ENCODE measurements at regions of chr22 and their contacts with region 1.

Region 1: DNA sequence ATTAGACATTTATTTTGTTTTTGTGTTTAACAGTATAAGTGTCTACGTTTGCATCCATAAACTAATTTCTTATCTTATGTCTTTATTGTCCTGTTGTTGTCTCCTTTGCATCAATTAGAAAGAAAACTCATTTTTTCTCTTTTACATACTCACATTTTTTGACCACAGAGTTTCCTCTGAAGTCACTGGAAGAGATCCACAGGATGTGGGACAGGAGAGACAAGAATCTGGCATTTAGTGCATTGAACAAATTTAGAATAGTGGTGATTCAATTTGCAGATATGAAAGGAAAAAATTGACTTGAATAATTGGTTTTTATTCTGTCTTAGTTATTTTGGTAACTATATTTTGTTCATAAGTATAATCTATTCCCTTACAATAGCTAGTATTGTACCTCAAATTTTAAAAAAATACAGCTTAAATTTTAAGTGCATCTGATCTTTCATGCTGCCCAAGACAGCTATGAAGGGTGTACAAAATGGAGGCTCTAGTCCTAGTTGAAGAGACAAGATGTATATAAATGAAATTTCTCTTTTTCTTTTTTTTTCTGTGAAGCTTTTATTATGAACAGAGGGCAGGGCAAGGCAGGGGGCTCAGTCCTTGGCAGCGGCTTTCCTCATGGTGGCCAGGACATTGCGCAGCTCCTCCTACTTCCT is 24.4 kb downstream of the HORMAD2 start:
- DNase-seq: peak; percentile 29
- H3K4me3 Mint-ChIP-seq: peak overlapping the region; percentile 51
- H3K27ac Mint-ChIP-seq: peak overlapping the region; percentile 87
- H3K4me1 Mint-ChIP-seq: peaks cover 74% of the 10 kb centered on the region
- H3K27me3 Mint-ChIP-seq: no peaks in the 10 kb centered on the region

Region 2: GRCh38 chr22:30062950-30063349 is 41.7 kb before region 1 on chr22:
- CTCF ChIA-PET with region 1: no interaction called
- POLR2A ChIA-PET with region 1: no interaction called
- DNase-seq: no peak
- H3K4me3 Mint-ChIP-seq: no peak overlapping the region
- H3K27ac Mint-ChIP-seq: no peak overlapping the region
- H3K4me1 Mint-ChIP-seq: no peaks in the 10 kb centered on the region
- H3K27me3 Mint-ChIP-seq: peaks cover 36% of the 10 kb centered on the region

Region 3: GRCh38 chr22:30121960-30122359 is 17.3 kb after region 1 on chr22:
- CTCF ChIA-PET with region 1: interaction called, 27 read pairs
- POLR2A ChIA-PET with region 1: interaction called, 3 read pairs
- DNase-seq: no peak
- H3K4me3 Mint-ChIP-seq: peak overlapping the region; percentile 4
- H3K27ac Mint-ChIP-seq: no peak overlapping the region
- H3K4me1 Mint-ChIP-seq: peaks cover 39% of the 10 kb centered on the region
- H3K27me3 Mint-ChIP-seq: peaks cover 5% of the 10 kb centered on the region

Region 4: DNA sequence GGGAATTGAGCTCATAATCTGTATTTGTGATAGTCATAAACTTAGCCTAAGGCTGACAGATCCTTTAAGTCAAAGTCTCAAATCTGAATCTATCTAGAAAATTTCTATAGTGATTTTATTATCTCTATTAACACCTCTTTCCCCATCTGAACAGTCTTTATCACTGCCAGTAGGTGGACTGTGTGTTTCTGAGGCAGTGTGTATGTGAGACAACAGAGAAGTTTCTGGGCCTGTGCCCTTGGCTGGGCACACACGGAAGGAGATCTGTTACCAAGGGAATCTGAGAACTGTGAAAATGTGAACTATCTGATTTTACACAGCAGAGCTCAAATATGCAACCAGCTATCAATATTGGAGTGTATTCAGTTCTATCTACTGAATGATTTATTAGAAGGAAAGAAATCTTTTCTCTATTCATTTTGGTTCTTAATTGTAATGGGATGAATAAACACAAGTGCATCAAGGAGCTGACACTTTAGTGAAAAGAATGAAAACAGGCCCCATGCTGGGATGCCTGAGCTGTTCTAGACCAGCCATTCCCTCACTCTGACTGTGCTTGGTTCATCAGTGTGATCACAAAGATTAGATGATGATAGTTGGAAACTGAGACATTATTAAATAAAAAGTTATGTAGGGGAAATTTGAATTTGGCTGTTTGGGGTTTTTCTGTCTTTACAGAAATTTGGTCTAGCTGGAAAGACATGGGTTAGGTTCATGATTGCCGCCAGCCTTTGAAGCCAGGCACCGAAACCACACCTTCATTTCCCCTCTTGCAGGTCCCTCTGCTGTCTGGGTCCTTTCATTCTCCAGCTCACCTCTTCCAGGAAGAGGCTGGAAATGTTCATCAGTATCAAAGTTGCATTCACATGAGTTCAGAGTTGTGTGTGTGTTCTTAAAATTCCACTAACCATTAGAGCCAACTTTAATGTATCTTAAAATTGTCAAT is 73.8 kb after region 1 on chr22:
- CTCF ChIA-PET with region 1: interaction called, 19 read pairs
- POLR2A ChIA-PET with region 1: interaction called, 9 read pairs
- DNase-seq: peak; percentile 48
- H3K4me3 Mint-ChIP-seq: no peak overlapping the region
- H3K27ac Mint-ChIP-seq: peak overlapping the region; percentile 91
- H3K4me1 Mint-ChIP-seq: peaks cover 80% of the 10 kb centered on the region
- H3K27me3 Mint-ChIP-seq: no peaks in the 10 kb centered on the region

Region 5: DNA sequence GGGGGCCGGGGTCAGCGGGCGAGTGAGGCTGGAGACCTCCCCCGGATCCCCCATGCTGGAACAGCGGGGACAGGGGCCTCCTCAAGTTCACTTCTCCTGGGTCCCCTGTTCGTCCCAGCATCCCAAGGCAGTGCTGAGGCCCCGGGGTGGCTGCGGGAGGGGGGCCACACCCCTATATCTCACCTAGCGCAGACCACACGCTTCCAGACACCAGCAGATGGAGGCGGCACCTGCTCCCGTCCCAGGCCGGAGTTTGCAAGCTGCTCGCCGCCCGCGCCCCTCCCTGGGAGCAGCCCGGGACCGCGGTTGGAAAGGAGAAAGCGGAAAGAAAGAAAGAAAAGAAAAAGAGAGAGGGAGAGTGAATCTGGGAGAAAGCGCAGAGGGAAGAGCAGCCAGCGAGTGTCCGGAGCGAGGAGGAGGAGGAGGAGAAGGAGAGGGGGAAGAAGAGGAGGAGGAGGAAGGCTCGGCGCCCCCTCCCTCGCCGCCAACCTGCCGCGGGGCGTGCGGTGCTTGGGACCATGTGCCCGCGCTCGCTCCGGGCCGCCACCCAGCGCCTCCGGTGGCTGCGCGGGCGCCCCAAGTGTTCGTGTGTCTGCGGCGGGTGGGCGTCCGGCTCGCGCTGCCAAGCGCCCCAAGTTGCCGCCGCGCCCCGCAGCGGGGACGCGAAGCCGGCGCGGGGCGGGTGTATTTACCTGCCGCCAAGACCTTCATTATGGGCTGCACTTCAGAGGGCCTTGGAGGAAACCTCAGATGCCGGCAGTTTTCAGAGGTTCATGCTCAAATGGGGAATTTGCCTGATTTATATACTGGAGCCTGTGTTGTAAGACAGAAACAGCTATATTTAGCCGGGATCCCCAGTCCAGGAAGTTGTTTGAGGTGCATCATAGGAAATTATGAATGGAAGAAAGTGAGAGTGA is 141.6 kb after region 1 on chr22 and contains the start of gene LIF:
- CTCF ChIA-PET with region 1: interaction called, 12 read pairs
- POLR2A ChIA-PET with region 1: interaction called, 6 read pairs
- DNase-seq: peak; percentile 67
- H3K4me3 Mint-ChIP-seq: peak within 1 kb of the TSS; percentile 95
- H3K27ac Mint-ChIP-seq: peak within 1 kb of the TSS; percentile 91
- H3K4me1 Mint-ChIP-seq: peaks cover 78% of the 10 kb centered on the region
- H3K27me3 Mint-ChIP-seq: no peaks in the 10 kb centered on the region
- total RNA-seq, gene LIF: 94.6 to 94.8 TPM

Region 6: GRCh38 chr22:30253205-30253852 is 148.7 kb after region 1 on chr22:
- CTCF ChIA-PET with region 1: interaction called, 76 read pairs
- POLR2A ChIA-PET with region 1: interaction called, 4 read pairs
- DNase-seq: no peak
- H3K4me3 Mint-ChIP-seq: no peak overlapping the region
- H3K27ac Mint-ChIP-seq: no peak overlapping the region
- H3K4me1 Mint-ChIP-seq: peaks cover 63% of the 10 kb centered on the region
- H3K27me3 Mint-ChIP-seq: no peaks in the 10 kb centered on the region

Region 7: GRCh38 chr22:30262917-30263741 is 158.5 kb after region 1 on chr22:
- CTCF ChIA-PET with region 1: interaction called, 9 read pairs
- POLR2A ChIA-PET with region 1: interaction called, 15 read pairs
- DNase-seq: peak; percentile 81
- H3K4me3 Mint-ChIP-seq: peak overlapping the region; percentile 99
- H3K27ac Mint-ChIP-seq: peak overlapping the region; percentile 80
- H3K4me1 Mint-ChIP-seq: peaks cover 62% of the 10 kb centered on the region
- H3K27me3 Mint-ChIP-seq: no peaks in the 10 kb centered on the region

Region 8: GRCh38 chr22:30408414-30409104 is 303.9 kb after region 1 on chr22:
- CTCF ChIA-PET with region 1: no interaction called
- POLR2A ChIA-PET with region 1: no interaction called
- DNase-seq: no peak
- H3K4me3 Mint-ChIP-seq: no peak overlapping the region
- H3K27ac Mint-ChIP-seq: no peak overlapping the region
- H3K4me1 Mint-ChIP-seq: peaks cover 13% of the 10 kb centered on the region
- H3K27me3 Mint-ChIP-seq: no peaks in the 10 kb centered on the region